Posterior cingulate gyrus (tissue), 11 donors: ENCODE measurements at regions of chr13 and their contacts with region 1.

Region 1: GRCh38 chr13:74133657-74134201 is 475 bp downstream of the KLF12 start:
- DNase-seq: peak; percentile 41 to 93 (median 72)

Region 2: DNA sequence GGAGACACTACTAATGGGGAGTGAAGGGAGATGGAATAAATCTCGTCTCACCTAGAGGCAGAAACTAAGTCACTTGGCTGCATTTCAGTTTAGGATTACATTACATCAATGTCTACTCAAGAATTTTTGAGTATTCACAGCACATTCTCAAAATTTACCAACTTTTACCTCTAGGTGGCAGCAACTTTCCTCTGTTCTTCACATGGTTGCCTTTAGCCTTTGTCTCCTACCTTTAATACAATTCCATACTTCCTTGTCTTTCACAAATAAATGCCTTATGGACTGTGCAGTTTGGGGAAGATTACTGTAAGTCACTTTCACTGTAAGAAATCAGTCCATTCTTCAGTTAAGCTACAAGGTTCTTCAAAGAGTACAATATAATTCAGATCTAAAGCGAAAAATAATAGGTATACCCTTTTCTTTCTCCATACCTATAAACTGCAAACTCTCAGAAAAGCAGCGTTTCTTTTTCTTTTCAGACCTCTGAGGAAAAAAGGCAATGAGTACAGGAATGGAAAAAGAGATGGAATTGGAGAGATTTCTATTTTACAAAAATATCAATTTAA is 378.9 kb before region 1 on chr13:
- intact Hi-C with region 1: loop called (anchors 10 kb)
- DNase-seq: no peak

Region 3: DNA sequence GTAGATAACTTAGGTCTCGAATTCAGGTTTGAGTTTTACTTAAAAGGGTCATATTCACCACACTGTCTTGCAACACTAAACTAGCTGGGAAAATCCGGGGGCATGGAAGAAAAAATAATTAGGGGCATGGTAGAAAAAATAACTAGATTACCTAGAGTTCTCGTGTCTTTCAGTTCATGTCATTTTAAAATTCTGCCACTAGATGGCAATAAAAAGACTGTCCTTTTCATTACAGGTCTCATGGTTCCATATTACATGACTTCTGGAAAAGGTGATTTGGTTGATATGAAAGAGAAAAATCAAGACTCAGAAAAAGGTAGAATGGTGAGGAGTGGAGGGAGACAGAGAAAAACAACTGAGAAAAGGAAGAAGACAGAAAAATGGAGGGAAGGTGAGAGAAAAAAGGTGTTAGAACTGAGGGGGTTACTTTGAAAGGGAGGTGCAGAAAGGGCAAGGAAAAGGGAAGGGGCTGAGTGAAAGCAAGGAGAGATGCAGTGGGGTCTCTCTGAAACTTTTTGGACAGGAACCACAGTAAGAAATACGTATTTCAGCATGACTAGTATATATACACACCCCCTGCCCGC is 298.5 kb before region 1 on chr13:
- intact Hi-C with region 1: loop called (anchors 10 kb)
- DNase-seq: no peak

Region 4: DNA sequence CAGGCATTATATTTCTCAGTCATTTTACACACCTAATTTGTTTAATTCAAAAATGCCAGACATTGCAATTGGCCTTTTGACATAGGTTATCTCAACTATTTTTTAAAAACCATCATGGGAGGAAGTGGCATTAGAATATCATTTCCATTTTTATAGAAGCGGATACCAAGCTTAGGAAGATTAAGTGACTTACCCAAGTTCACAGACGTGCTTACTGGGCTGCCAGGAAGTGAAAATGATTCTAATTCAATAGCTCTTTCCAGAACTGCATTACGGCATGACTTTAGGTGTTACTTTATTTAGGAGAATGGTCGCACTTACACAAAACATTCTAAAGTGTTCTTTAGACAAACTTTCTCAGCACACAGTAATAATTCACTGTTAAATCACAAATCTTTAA is 231.4 kb before region 1 on chr13:
- intact Hi-C with region 1: no loop called
- DNase-seq: no peak

Region 5: GRCh38 chr13:74052402-74052928 is 81.3 kb before region 1 on chr13:
- intact Hi-C with region 1: no loop called
- DNase-seq: no peak

Region 6: GRCh38 chr13:74062933-74063332 is 70.8 kb before region 1 on chr13:
- intact Hi-C with region 1: loop called (anchors 5 kb)
- DNase-seq: peak in 8 of 10 donors; percentile 15 to 91 (median 44)

Region 7: GRCh38 chr13:74287724-74288169 is 154.0 kb after region 1 on chr13:
- intact Hi-C with region 1: loop called (anchors 5 kb)
- DNase-seq: peak; percentile 41 to 96 (median 77)

Region 8: DNA sequence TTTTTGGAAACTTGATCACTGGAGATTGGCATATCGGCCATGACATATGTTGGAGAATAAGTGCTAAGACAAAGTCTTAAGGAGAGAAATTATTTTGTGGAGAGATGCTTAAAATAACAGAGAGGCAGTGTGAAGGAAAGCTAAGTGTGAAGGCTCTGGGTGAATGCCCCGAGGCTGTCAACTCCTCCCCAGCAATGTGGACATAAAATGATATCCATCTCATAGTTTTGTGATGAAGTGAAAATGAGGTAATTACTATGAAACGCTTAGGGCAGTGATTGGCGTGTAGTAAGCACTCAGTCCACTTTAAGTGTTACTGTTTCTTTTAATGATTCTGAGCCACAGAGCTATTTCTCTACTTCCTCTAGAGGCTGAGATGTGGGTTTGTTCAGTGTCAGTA is 196.2 kb after region 1 on chr13:
- intact Hi-C with region 1: no loop called
- DNase-seq: no peak